AG04449 (cell line): ENCODE measurements at regions of chr1 and their contacts with region 1.

Region 1: GRCh38 chr1:32636914-32637645 is 13.3 kb downstream of the ZBTB8OS start:
- DNase-seq: no peak
- H3K4me3 ChIP-seq: no peak overlapping the region
- CTCF ChIP-seq: no peak

Region 2: DNA sequence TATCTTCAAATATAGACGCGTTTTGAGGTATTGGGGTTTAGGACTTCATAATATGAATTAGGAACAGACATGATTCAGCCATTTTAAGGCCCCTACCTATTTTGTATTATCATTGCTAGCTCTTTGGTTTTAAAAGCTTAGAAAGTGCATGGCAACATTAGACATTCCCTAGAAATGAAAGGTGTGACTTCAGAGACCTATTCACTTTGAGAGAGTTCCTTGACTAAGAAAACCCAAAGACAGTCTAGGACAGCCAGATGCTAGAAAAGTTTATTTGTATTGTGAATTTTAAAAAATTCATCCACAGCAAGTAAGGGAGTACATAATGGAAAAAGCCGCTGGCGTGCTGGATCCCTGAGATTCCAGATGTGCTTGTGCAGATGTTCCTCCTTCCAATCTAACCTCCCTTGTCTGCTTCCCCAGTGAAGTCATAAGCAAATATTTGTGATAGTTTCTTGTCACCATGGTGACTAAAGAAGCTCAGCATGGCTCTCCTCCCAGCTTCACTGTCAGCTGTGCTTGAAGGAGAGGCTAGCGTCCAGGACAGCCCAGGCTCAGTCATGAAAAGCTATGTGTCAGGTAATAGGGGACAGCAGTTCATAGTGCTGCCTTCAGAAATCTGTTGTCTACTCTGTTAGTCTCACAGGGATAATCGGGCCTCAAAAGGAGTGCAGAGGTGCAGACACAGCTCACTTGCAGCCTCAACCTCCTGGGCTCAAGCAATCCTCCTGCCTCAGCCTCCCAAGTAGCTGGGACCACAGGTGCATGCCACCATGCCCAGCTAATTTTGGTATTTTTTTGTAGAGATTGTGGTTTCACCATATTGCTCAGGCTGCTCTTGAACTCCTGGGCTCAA is 494.4 kb before region 1 on chr1:
- CTCF ChIA-PET with region 1: no interaction called
- POLR2A ChIA-PET with region 1: no interaction called
- DNase-seq: no peak
- H3K4me3 ChIP-seq: no peak overlapping the region
- CTCF ChIP-seq: no peak

Region 3: DNA sequence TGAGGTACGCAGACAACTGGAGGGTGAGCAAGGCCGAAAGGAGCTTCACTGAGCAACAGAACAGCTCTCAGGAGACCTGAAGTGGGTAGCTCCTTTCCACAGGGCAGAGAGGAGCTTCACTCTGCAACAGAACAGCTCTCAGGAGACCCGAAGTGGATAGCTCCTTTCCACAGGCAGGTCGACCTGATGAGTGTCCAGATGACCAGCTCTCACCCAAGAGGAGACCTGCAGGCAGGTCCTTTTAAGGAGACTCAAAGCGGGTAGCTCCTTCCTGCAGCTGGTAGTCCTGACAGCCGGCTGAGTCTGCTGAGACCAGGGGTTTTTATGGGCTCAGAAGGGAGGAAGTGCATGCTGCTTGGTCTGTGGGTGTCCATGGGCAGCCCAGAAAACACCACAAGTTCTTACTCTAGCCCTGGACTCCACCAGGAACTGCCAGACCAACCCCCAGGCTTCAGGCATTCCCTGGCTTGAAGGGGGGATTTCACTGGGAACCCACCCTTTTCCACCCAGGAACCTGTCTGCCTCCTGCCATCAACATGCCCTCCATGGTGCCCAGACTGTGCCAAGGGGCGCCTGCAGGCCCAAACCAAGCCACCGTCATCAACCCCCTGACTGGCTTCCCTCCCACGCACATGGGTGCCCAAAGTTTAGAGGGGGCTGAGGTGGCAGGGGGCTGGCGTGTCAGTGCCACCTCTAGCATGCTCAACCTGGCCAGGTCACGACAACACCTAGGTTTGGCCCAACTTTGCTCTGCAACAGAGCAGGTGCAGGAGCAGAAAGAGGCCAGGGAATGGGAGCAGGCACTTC is 30.3 kb before region 1 on chr1:
- CTCF ChIA-PET with region 1: no interaction called
- POLR2A ChIA-PET with region 1: no interaction called
- DNase-seq: no peak
- H3K4me3 ChIP-seq: no peak overlapping the region
- CTCF ChIP-seq: no peak

Region 4: GRCh38 chr1:32619701-32620485 is 17.2 kb before region 1 on chr1:
- CTCF ChIA-PET with region 1: interaction called, 10 read pairs
- POLR2A ChIA-PET with region 1: no interaction called
- DNase-seq: no peak
- H3K4me3 ChIP-seq: no peak overlapping the region
- CTCF ChIP-seq: no peak

Region 5: DNA sequence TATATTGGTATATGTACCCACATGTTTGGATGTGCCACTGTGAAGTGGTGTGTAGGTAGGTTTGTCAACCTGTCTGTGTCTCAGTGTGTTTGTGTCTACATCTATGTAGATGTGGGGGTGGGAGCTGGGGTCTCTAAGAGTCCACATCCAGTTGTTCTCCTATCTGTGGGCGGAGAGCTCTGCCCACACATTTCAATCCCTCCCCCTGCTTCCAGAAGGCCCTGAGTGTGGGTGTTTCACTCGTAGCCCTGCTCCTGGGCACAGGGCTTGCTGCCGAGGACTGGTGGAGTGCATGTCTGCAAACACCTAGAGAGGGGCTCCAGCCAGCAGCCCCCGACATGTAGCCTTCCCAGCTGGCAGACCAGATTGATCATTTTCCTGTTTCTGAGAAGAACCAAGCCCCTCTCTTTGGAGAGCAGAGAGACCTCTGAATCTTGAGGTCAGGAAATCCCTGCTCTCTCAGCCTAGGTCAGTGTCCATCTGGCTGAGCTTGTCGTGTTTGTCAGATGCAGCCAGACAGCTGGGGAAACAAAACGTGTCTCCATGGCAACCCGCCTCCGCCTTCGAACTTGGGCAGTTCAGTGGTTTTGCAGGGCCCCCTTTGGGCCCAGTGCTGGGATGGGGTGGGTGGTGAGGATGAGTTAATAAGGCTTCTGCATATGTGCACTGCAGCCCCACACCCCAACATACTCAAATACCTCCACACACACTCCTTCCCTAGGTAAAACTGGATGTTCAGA is 96.7 kb after region 1 on chr1:
- CTCF ChIA-PET with region 1: no interaction called
- POLR2A ChIA-PET with region 1: no interaction called
- DNase-seq: no peak
- H3K4me3 ChIP-seq: no peak overlapping the region
- CTCF ChIP-seq: no peak